ENCODE measurements at regions of chr1 and their contacts with region 1.

Region 1: GRCh38 chr1:108570128-108570527 is 10.2 kb downstream of the EEIG2 start:
- DNase-seq: peak; percentile 25
- ATAC-seq: peak; percentile 97
- H3K4me3 ChIP-seq: no peak overlapping the region
- H3K27ac ChIP-seq: no peak overlapping the region
- H3K4me1 ChIP-seq: peaks cover 26% of the 10 kb centered on the region
- H3K27me3 ChIP-seq: no peaks in the 10 kb centered on the region
- CTCF ChIP-seq: peak; percentile 57
- EP300 ChIP-seq: no peak
- POLR2A ChIP-seq: no peak
- RAD21 ChIP-seq: no peak

Region 2: DNA sequence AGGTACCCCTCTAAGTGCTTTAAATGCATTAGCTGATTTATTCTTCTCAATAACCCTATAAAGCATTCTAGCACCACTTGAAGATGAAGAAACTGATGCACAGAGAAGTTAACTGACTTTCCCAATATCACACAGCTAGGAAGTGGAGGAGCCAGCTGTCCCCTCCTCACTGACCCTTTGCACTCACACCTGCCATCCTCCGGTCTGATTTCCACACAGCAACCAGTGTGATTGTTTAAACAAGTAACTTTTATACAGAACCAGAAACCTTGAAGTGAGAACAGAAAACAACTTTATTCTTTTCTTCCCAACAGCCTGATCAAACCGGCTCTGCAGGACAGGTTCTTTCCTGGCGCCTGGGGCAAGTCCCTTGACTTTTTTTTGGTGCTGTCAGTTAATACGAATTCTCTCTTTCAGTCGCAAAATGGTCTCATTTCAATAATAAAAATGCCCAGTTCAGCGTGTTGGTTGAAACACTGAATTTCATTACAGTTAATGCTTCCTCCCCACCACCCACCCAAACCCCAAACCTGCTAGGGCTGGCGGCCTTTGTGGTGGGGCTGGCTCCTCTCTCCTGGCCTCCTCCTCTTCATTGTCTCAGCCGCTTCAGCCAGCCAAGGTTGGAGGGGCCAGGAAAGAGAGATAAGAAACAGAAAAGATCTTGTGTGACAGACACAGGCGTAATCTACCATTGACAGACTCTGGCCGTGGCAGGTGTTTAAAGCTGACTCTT is 36.6 kb before region 1 on chr1:
- CTCF ChIA-PET with region 1: no interaction called
- POLR2A ChIA-PET with region 1: no interaction called
- in situ Hi-C with region 1: no loop called
- intact Hi-C with region 1: no loop called
- DNase-seq: no peak
- ATAC-seq: no peak; the same call in 2 of the 3 replicates
- H3K4me3 ChIP-seq: no peak overlapping the region
- H3K27ac ChIP-seq: no peak overlapping the region
- H3K4me1 ChIP-seq: no peaks in the 10 kb centered on the region
- H3K27me3 ChIP-seq: no peaks in the 10 kb centered on the region
- CTCF ChIP-seq: no peak
- EP300 ChIP-seq: no peak
- POLR2A ChIP-seq: no peak
- RAD21 ChIP-seq: no peak

Region 3: GRCh38 chr1:108584348-108584856 is 14.3 kb after region 1 on chr1:
- CTCF ChIA-PET with region 1: no interaction called
- POLR2A ChIA-PET with region 1: no interaction called
- in situ Hi-C with region 1: no loop called
- intact Hi-C with region 1: loop called (anchors 2 kb)
- DNase-seq: peak; percentile 31
- ATAC-seq: no peak; the same call in 2 of the 3 replicates
- H3K4me3 ChIP-seq: no peak overlapping the region
- H3K27ac ChIP-seq: no peak overlapping the region
- H3K4me1 ChIP-seq: peaks cover 14% of the 10 kb centered on the region
- H3K27me3 ChIP-seq: no peaks in the 10 kb centered on the region
- CTCF ChIP-seq: no peak
- EP300 ChIP-seq: no peak
- POLR2A ChIP-seq: no peak
- RAD21 ChIP-seq: no peak